ENCODE measurements at regions of chr3 and their contacts with region 1.

Region 1: GRCh38 chr3:127547761-127548605 is 42.5 kb downstream of the TPRA1 start:
- DNase-seq: peak; percentile 62 to 84 (median 83)
- H3K4me3 ChIP-seq: peak overlapping the region; percentile 23 to 81 (median 62)
- H3K27ac ChIP-seq: no peak overlapping the region
- H3K4me1 ChIP-seq: peaks cover 0 to 18% (median 12%) of the 10 kb centered on the region in 4 experiments
- H3K27me3 ChIP-seq: peaks cover 0 to 5% (median 0%) of the 10 kb centered on the region in 5 experiments

Region 2: DNA sequence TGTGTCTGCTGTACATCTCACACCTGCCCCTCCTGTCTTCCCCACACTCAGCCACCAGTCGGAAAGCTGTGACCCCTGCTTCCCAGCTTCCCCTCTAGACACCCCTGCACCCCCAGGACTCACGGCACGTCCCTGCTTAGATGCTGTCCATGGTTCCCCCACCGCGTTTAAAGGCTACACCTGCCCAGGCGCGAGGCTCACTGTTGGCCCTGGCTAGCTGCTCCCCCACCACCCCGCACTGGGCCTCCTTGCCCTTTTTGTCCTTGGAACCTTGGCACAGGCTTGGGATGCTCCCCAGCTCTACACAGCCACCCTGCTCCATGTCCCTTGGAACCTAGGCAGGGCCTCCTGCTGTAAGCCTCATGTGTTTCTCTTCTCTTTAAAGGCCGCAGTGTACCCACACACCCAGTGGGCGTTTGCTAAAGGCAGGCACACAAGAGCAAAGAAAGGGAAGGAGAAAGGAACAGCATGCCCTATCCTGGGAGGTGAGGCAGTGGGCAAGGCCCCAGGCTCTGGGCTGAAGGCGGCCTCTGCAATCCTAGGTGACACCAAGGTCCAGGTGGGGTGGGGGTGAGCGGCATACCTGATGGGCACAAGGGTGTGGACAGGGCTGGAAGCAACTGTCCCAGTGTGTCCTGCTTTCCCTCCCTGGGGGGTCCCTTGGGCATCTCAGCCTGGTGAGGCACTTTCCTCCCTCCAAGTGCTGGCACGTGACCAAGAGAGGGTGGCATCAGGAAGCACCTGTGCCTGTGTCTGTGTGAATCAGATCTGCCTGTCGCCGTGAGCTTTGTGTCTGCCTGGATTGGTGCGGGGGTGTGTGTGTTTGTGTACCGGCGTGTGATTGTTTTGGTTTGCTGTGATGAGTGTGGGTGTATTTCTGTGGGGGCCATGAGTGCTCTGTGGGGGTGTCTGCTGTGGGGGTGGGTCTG is 11.8 kb before region 1 on chr3:
- CTCF ChIA-PET with region 1: interaction called, 17 read pairs
- POLR2A ChIA-PET with region 1: no interaction called
- DNase-seq: peak in 2 of 3 donors; percentile 72 to 84
- H3K4me3 ChIP-seq: peak overlapping the region in 2 of 7 experiments; percentile 7 to 14
- H3K27ac ChIP-seq: no peak overlapping the region
- H3K4me1 ChIP-seq: peaks cover 0 to 13% (median 11%) of the 10 kb centered on the region in 4 experiments
- H3K27me3 ChIP-seq: peaks cover 0 to 4% (median 0%) of the 10 kb centered on the region in 5 experiments